Panc1 (cell line): ENCODE measurements at regions of chr19 and their contacts with region 1.

Region 1: DNA sequence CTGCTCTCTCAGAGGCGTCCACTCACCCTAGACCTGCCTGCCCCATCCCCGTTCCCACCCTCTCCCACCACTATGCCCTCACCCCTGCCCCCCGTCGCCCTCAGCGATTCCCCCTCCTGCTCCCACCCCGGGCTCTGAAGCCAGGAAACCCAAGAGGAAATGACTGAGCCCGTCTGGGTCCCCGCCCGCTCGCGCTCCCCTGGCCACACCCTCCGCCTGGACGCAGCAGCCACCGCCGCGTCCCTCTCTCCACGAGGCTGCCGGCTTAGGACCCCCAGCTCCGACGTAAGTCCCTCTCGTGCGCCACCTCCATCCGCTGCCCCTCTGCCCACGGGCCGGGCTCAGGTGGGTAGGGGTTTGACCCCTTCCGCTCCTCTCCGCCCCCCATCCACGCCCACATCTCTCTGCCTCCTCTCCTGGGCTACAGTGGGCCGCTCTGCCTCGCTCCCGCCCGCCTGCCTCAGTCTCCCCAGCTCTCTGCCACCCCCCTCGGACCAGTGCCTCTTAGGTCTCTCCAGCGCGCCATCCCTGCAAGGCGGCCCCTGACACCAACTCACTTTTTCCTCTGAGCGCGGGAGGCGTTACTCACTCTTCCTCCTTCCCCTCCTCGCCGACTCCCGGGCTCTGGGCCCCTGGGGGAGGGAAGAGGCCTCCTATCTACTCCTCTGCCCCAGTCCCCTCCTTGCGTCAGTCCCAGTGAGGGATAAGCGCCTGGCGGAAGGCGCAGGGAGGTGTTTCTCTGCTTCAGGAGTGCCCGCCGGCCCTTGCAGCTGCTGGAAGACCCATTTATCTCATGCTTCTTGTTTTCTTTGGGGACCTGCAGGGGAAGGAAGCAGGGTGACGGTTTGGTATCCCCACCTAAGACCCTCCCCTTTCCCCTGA is at the start of gene FXYD5:
- DNase-seq: no peak
- ATAC-seq: peak; percentile 87
- H3K4me3 ChIP-seq: peak within 1 kb of the TSS; percentile 71 to 83
- H3K27ac ChIP-seq: peak within 1 kb of the TSS; percentile 72
- H3K4me1 ChIP-seq: peaks cover 10% of the 10 kb centered on the region
- H3K27me3 ChIP-seq: no peaks in the 10 kb centered on the region
- CTCF ChIP-seq: no peak
- total RNA-seq, gene FXYD5: 33.6 TPM

Region 2: DNA sequence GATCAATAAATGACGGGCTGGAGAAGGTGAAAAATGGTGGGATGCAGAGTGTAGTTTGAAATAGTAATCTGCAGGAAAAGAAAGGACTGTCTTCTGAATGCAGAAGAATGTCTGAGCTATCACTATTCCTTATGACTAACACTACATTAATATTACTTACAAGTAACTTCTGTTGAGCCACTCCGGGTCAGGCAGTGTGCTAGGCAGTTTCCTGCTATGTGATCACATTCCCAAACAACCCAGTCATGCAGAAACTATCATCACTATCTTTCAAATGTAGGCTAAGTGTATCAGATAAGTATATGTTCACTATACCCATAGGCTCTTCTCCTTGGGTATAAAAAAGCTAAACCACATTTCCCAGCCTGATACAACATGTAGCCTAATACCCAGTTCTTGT is 388.4 kb before region 1 on chr19:
- CTCF ChIA-PET with region 1: no interaction called
- POLR2A ChIA-PET with region 1: no interaction called
- in situ Hi-C with region 1: no loop called
- intact Hi-C with region 1: no loop called
- DNase-seq: no peak
- ATAC-seq: no peak
- H3K4me3 ChIP-seq: no peak overlapping the region
- H3K27ac ChIP-seq: no peak overlapping the region
- H3K4me1 ChIP-seq: no peaks in the 10 kb centered on the region
- H3K27me3 ChIP-seq: no peaks in the 10 kb centered on the region
- CTCF ChIP-seq: no peak

Region 3: GRCh38 chr19:34832581-34833112 is 322.1 kb before region 1 on chr19:
- CTCF ChIA-PET with region 1: no interaction called
- POLR2A ChIA-PET with region 1: no interaction called
- in situ Hi-C with region 1: no loop called
- intact Hi-C with region 1: no loop called
- DNase-seq: no peak
- ATAC-seq: no peak
- H3K4me3 ChIP-seq: no peak overlapping the region
- H3K27ac ChIP-seq: no peak overlapping the region
- H3K4me1 ChIP-seq: no peaks in the 10 kb centered on the region
- H3K27me3 ChIP-seq: peaks cover 17% of the 10 kb centered on the region
- CTCF ChIP-seq: no peak

Region 4: DNA sequence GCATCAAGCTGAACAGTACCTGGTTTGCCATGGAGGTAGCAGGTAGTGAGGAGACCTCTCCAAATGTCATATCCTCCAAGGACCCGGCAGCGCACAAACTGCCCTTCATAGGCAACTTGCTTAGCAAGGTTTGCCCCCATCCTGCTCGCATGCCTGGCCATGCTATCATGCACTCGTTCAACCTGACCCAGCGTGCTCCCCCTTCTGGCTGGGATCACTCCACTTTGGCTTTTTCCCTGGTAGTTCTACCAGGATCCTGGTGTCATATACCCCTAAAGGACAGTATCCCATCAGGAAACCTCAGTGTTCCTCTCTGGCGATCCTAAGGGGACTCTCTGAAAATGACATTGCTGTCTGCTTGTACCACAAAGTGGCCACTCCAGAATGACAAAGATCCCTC is 266.7 kb before region 1 on chr19:
- CTCF ChIA-PET with region 1: interaction called, 10 read pairs
- POLR2A ChIA-PET with region 1: no interaction called
- in situ Hi-C with region 1: no loop called
- intact Hi-C with region 1: no loop called
- DNase-seq: no peak
- ATAC-seq: no peak
- H3K4me3 ChIP-seq: no peak overlapping the region
- H3K27ac ChIP-seq: no peak overlapping the region
- H3K4me1 ChIP-seq: no peaks in the 10 kb centered on the region
- H3K27me3 ChIP-seq: no peaks in the 10 kb centered on the region
- CTCF ChIP-seq: no peak

Region 5: DNA sequence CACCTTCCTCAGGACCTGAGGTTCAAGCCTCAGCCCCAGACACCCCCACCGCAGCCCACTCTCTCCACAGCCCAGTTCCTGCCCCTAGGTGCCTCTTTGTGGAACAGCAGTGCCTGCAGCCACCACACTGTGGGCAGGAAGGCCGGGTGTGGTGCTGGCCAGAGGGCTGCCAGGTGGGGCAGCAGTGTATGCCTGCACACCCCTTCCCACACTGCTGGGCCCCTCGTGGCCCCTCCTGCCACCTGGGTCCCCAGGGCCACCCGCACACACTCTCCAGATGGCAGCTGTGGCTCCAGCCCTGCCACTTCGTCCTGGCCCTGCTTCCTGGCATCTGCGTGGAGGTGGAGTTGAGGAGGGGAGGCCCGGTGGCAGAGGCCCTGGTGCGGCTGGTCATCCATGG is 78.1 kb before region 1 on chr19:
- CTCF ChIA-PET with region 1: no interaction called
- POLR2A ChIA-PET with region 1: no interaction called
- in situ Hi-C with region 1: no loop called
- intact Hi-C with region 1: no loop called
- DNase-seq: no peak
- ATAC-seq: no peak
- H3K4me3 ChIP-seq: no peak overlapping the region
- H3K27ac ChIP-seq: no peak overlapping the region
- H3K4me1 ChIP-seq: no peaks in the 10 kb centered on the region
- H3K27me3 ChIP-seq: no peaks in the 10 kb centered on the region; the same call in 1 of the 2 replicates
- CTCF ChIP-seq: no peak

Region 6: DNA sequence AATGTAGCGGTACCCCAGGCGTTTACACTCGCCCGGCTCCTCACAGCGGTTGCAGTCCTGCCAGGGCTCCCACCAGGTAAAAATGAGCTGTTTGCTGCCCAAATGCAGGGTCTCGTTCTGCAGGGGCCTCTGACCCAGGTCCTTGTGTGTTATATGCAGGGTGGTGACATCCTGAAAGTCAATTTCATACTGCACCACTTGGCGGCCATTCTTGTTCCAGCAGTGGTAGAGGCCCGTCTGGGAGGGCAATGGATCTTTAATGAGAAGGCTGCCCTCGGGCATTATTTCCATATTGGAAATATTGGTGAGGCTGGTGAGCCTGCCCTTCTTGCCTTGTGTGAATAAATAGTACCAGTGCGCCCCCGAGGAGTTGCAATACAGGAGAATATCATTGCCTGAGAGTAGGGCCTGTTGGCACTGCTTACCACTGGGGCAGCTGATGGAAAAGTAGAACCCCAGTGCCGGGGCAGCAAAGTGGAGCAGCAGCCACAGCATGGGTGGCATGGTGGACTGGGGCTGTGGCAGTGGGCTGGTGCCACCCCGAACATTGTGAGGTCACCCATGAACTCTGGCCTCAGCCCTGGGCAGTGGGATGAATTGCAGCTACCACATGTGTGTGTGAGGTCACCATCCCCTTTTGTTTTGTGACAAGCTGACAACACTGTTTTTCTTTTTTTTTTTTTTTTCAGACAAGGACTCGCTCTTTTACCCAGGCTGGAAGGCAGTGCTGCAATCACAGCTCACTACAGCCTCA is 73.6 kb after region 1 on chr19 and contains the start of gene FAM187B:
- CTCF ChIA-PET with region 1: no interaction called
- POLR2A ChIA-PET with region 1: no interaction called
- in situ Hi-C with region 1: no loop called
- intact Hi-C with region 1: no loop called
- DNase-seq: no peak
- ATAC-seq: no peak
- H3K4me3 ChIP-seq: no peak within 1 kb of the TSS
- H3K27ac ChIP-seq: no peak within 1 kb of the TSS
- H3K4me1 ChIP-seq: no peaks in the 10 kb centered on the region
- H3K27me3 ChIP-seq: 0 out of 2 replicates have a peak, but pooled peaks cover 2% of the 10 kb centered on the region
- CTCF ChIP-seq: no peak
- total RNA-seq, gene FAM187B: not detected